IMR-90 (cell line): ENCODE measurements at regions of chr6 and their contacts with region 1.

Region 1: DNA sequence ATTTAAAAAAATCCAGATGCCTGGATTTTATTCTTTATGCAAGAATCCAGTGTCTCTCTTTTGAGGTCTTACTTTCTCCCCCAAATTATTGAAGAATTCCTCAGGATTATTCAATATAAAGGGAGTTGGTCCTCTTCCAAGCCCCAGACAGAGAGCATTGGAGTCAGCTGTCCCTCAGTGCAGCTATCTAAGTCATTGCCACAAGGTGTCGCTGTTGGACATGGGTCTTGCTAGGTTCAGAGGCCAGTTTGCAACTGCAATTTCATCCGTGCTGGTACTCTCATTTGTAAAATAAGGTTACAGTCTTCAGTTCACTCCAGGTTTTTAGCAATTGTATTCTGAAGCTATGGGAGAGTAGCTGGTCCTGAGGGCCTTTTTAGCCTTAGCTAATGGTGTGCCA is 27.8 kb downstream of the CCN2 start:
- DNase-seq: peak; percentile 57
- ATAC-seq: no peak
- H3K4me3 ChIP-seq: no peak overlapping the region
- H3K27ac ChIP-seq: no peak overlapping the region
- H3K4me1 ChIP-seq: no peaks in the 10 kb centered on the region
- H3K27me3 ChIP-seq: no peaks in the 10 kb centered on the region
- CTCF ChIP-seq: peak; percentile 49
- POLR2A ChIP-seq: no peak
- RAD21 ChIP-seq: peak; percentile 62

Region 2: DNA sequence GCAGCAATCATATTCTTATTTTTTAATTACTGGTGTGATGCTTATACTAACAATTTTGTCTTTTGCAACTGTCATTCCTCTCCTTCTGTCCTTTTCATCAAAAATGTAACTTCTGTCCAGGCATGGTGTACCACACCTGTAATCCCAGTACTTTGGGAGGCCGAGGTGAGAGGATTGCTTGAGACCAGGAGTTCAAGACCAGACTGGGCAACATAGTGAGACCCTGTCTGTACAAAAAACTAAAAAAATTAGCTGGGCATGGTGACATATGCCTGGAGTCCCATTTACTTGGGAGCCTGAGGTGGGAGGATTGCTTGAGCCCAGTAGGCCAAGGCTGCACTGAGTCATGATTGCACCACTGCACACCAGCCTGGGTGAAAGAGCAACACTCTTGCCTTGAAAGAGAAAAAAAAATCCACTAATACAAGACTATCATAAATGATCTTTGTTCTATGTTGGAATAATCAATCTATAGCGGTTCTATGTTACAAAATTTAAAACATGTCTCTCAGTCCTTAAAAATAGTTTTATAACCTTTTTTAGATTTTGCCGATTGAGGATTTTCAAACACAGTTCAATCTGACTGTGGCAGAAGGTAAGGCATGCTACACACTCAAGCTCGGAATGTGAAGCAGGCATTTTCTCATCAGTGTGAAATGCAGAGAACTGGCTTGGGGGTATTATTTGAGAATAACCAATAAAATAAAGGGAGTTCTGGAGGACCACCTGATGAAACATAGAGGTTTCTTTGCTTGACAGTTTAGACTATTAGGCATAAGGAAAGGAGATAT is 45.2 kb before region 1 on chr6:
- CTCF ChIA-PET with region 1: no interaction called
- POLR2A ChIA-PET with region 1: no interaction called
- dilution Hi-C with region 1: no loop called
- in situ Hi-C with region 1: no loop called
- intact Hi-C with region 1: no loop called
- DNase-seq: peak; percentile 19
- ATAC-seq: 0 out of 2 replicates have a peak, but pooled peaks have one; percentile 44
- H3K4me3 ChIP-seq: no peak overlapping the region
- H3K27ac ChIP-seq: no peak overlapping the region
- H3K4me1 ChIP-seq: no peaks in the 10 kb centered on the region
- H3K27me3 ChIP-seq: no peaks in the 10 kb centered on the region
- CTCF ChIP-seq: no peak
- POLR2A ChIP-seq: no peak
- RAD21 ChIP-seq: no peak

Region 3: DNA sequence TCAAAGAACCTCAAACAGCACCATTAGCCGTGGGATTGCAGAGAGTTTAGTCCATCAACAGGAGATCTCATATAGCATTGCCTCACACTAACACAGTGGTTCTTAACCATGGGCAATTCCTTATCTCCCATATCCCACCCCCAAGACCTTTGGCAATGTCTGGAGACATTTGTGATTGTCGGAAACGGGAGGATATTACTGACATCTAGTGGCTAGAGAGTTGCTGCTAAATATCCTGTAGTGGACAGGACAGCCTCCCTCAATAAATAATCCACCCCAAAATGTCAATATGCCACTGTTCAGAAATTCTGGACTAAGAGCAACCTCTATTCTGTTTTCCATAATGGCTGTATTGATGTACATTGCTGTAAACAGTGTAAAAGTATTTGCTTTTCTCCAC is 237.9 kb after region 1 on chr6:
- CTCF ChIA-PET with region 1: interaction called, 3 read pairs
- POLR2A ChIA-PET with region 1: no interaction called
- dilution Hi-C with region 1: no loop called
- in situ Hi-C with region 1: no loop called
- intact Hi-C with region 1: loop called (anchors 2 kb)
- DNase-seq: peak; percentile 80
- ATAC-seq: peak; percentile 89
- H3K4me3 ChIP-seq: no peak overlapping the region
- H3K27ac ChIP-seq: no peak overlapping the region
- H3K4me1 ChIP-seq: no peaks in the 10 kb centered on the region; the same call in 1 of the 2 replicates
- H3K27me3 ChIP-seq: no peaks in the 10 kb centered on the region
- CTCF ChIP-seq: peak; percentile 72
- POLR2A ChIP-seq: peak; percentile 46; the same call in 1 of the 2 replicates
- RAD21 ChIP-seq: peak; percentile 88

Region 4: GRCh38 chr6:132218059-132218696 is 294.8 kb after region 1 on chr6:
- CTCF ChIA-PET with region 1: interaction called, 7 read pairs
- POLR2A ChIA-PET with region 1: no interaction called
- dilution Hi-C with region 1: no loop called
- in situ Hi-C with region 1: no loop called
- intact Hi-C with region 1: loop called (anchors 1 kb)
- DNase-seq: peak; percentile 68
- ATAC-seq: peak; percentile 82
- H3K4me3 ChIP-seq: no peak overlapping the region
- H3K27ac ChIP-seq: no peak overlapping the region
- H3K4me1 ChIP-seq: no peaks in the 10 kb centered on the region; the same call in 1 of the 2 replicates
- H3K27me3 ChIP-seq: no peaks in the 10 kb centered on the region
- CTCF ChIP-seq: peak; percentile 66
- POLR2A ChIP-seq: no peak
- RAD21 ChIP-seq: peak; percentile 77

Region 5: DNA sequence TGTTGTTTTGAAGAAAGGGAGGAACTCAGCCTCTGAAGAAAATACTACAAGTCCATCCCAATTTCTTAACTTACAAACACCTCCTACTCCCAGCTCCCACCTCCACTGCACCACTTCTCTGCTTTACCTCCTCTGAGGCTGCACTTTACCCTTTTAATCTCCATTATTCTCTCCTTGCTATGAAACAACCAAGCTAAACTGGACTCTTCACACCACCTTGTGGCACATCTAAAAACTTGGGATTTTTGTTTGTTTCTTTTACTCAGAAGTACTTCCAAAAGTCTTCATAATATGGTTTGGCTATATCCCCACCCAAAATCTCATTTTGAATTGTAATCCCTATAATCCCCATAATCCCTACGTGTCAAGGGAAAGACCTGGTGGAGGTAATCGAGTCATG is 335.7 kb after region 1 on chr6:
- CTCF ChIA-PET with region 1: interaction called, 10 read pairs
- POLR2A ChIA-PET with region 1: no interaction called
- dilution Hi-C with region 1: no loop called
- in situ Hi-C with region 1: no loop called
- intact Hi-C with region 1: loop called (anchors 1 kb)
- DNase-seq: peak; percentile 58
- ATAC-seq: peak; percentile 66
- H3K4me3 ChIP-seq: no peak overlapping the region
- H3K27ac ChIP-seq: no peak overlapping the region
- H3K4me1 ChIP-seq: 0 out of 2 replicates have a peak, but pooled peaks cover 2% of the 10 kb centered on the region
- H3K27me3 ChIP-seq: peaks cover 1% of the 10 kb centered on the region; the same call in 1 of the 2 replicates
- CTCF ChIP-seq: peak; percentile 54
- POLR2A ChIP-seq: no peak
- RAD21 ChIP-seq: peak; percentile 70